Naive thymus-derived CD4-positive, alpha-beta T cell (primary cell): ENCODE measurements at regions of chrX and their contacts with region 1.

Region 1: DNA sequence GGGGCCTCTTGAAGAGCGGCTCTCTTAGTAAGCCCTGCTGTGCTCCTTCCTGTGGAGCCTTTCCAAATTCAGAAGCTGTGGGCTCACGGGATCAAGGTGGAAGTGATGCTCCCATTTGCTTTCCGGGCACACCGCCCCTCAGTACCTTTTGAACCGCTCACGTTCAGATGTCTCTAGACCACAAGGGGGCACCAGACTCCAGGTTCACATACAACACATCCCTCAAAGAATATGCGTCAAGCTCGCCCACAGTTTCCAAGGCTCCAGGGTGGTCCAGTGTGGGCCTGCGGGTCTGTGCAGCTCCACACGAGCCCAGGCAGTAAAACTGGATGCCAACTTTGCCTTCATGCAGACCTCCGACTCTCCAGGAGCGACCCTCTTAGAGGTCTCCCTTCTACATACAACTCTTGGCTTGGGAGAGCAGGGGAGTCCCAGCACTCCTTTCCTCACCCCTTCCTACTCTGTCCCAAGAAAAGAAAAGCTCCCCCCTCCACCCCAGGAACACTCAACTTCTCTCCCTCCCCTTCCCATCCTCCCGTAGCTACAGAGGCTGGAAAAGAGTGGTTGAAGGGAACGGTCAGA is 11.0 kb downstream of the SUPT20HL1 start:
- DNase-seq: peak; percentile 15 to 60 (median 44)
- ATAC-seq: peak; percentile 79
- H3K4me3 ChIP-seq: no peak overlapping the region
- H3K4me3 Mint-ChIP-seq: peak overlapping the region; percentile 8 to 82 (median 52)
- H3K27ac ChIP-seq: no peak overlapping the region
- H3K27ac Mint-ChIP-seq: peak overlapping the region in 1 of 9 donors; percentile 83
- H3K4me1 ChIP-seq: no peaks in the 10 kb centered on the region
- H3K4me1 Mint-ChIP-seq: peaks cover 5 to 30% (median 9%) of the 10 kb centered on the region in 7 donors
- H3K27me3 ChIP-seq: no peaks in the 10 kb centered on the region
- H3K27me3 Mint-ChIP-seq: peaks cover 0 to 4% (median 0%) of the 10 kb centered on the region in 5 donors

Region 2: GRCh38 chrX:24081661-24082264 is 289.7 kb before region 1 on chrX:
- CTCF ChIA-PET with region 1: no interaction called
- POLR2A ChIA-PET with region 1: no interaction called
- intact Hi-C with region 1: loop called in 1 of 2 experiments (anchors 5 kb)
- DNase-seq: peak; percentile 7 to 54 (median 43)
- ATAC-seq: peak; percentile 75
- H3K4me3 ChIP-seq: no peak overlapping the region
- H3K4me3 Mint-ChIP-seq: peak overlapping the region in 2 of 10 donors; percentile 23 to 38
- H3K27ac ChIP-seq: no peak overlapping the region
- H3K27ac Mint-ChIP-seq: no peak overlapping the region
- H3K4me1 ChIP-seq: no peaks in the 10 kb centered on the region
- H3K4me1 Mint-ChIP-seq: peaks cover 0 to 11% (median 7%) of the 10 kb centered on the region in 7 donors
- H3K27me3 ChIP-seq: no peaks in the 10 kb centered on the region
- H3K27me3 Mint-ChIP-seq: no peaks in the 10 kb centered on the region

Region 3: DNA sequence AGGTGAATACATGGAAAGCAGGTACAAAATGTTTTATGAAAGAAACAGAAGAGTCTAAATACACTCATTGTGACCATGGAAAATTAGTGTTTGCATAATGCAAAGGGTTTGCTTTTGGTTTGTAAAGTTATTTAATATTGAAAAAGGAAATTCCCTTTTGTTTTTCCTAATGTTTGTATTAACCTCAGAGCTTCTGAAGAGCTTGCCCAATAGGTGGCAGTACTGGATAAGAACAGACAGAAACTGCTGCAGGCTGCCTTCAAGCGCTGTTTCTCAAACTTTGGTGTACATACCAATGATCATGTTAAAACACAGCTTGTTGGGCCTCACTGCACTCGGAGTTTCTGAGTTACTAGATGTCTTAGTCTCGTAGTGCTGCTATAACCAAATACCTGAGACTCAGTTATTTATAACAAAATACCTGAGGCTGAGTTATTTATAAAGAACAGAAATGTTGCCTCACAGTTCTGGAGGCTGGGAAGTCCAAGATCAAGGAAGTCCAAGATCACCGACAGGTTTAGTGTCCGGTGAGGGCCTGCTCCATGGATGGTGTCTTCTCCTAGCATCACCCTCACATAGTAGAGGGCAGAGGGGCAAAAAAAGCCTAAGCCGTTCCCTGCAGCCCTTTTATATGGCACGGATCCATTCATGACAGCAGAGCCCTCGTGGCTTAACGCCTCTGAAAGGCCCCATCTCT is 111.8 kb before region 1 on chrX:
- CTCF ChIA-PET with region 1: interaction called, 3 read pairs
- POLR2A ChIA-PET with region 1: no interaction called
- intact Hi-C with region 1: loop called (anchors 1 to 2 kb)
- DNase-seq: peak in 5 of 9 donors; percentile 3 to 39 (median 6)
- ATAC-seq: peak; percentile 29
- H3K4me3 ChIP-seq: no peak overlapping the region
- H3K4me3 Mint-ChIP-seq: no peak overlapping the region
- H3K27ac ChIP-seq: no peak overlapping the region
- H3K27ac Mint-ChIP-seq: no peak overlapping the region
- H3K4me1 ChIP-seq: no peaks in the 10 kb centered on the region
- H3K4me1 Mint-ChIP-seq: peaks cover 9 to 27% (median 15%) of the 10 kb centered on the region in 7 donors
- H3K27me3 ChIP-seq: no peaks in the 10 kb centered on the region
- H3K27me3 Mint-ChIP-seq: peaks cover 0 to 2% (median 0%) of the 10 kb centered on the region in 5 donors

Region 4: DNA sequence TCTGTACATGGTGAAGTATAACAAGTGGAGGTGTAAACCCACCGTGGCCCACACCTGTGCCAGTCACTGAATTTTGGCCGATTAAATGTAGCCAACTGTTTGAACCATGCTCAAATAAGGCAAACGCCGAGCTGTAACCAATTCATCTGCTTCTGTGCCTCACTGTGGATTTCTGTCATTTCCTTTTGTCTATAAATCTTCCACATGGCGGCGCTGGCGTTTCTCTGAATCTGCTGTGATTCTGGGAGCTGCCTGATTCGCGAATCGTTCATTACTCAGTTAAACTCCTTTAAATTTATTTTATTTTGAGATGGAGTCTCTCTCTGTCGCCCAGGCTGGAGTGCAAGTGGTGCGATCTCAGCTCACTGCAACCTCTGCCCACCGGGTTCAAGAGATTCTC is 76.9 kb before region 1 on chrX:
- CTCF ChIA-PET with region 1: no interaction called
- POLR2A ChIA-PET with region 1: no interaction called
- intact Hi-C with region 1: loop called in 1 of 2 experiments (anchors 5 kb)
- DNase-seq: peak in 1 of 9 donors; percentile 21
- ATAC-seq: no peak
- H3K4me3 ChIP-seq: no peak overlapping the region
- H3K4me3 Mint-ChIP-seq: no peak overlapping the region
- H3K27ac ChIP-seq: no peak overlapping the region
- H3K27ac Mint-ChIP-seq: no peak overlapping the region
- H3K4me1 ChIP-seq: no peaks in the 10 kb centered on the region
- H3K4me1 Mint-ChIP-seq: no peaks in the 10 kb centered on the region
- H3K27me3 ChIP-seq: no peaks in the 10 kb centered on the region
- H3K27me3 Mint-ChIP-seq: peaks cover 0 to 2% (median 0%) of the 10 kb centered on the region in 5 donors

Region 5: GRCh38 chrX:24306440-24306839 is 65.0 kb before region 1 on chrX:
- CTCF ChIA-PET with region 1: no interaction called
- POLR2A ChIA-PET with region 1: no interaction called
- intact Hi-C with region 1: loop called in 1 of 2 experiments (anchors 5 kb)
- DNase-seq: no peak
- ATAC-seq: no peak
- H3K4me3 ChIP-seq: no peak overlapping the region
- H3K4me3 Mint-ChIP-seq: no peak overlapping the region
- H3K27ac ChIP-seq: no peak overlapping the region
- H3K27ac Mint-ChIP-seq: no peak overlapping the region
- H3K4me1 ChIP-seq: no peaks in the 10 kb centered on the region
- H3K4me1 Mint-ChIP-seq: peaks cover 0 to 12% (median 0%) of the 10 kb centered on the region in 7 donors
- H3K27me3 ChIP-seq: no peaks in the 10 kb centered on the region
- H3K27me3 Mint-ChIP-seq: no peaks in the 10 kb centered on the region

Region 6: GRCh38 chrX:24969812-24970211 is 598.3 kb after region 1 on chrX:
- CTCF ChIA-PET with region 1: no interaction called
- POLR2A ChIA-PET with region 1: no interaction called
- intact Hi-C with region 1: no loop called
- DNase-seq: no peak
- ATAC-seq: no peak
- H3K4me3 ChIP-seq: no peak overlapping the region
- H3K4me3 Mint-ChIP-seq: no peak overlapping the region
- H3K27ac ChIP-seq: no peak overlapping the region
- H3K27ac Mint-ChIP-seq: no peak overlapping the region
- H3K4me1 ChIP-seq: no peaks in the 10 kb centered on the region
- H3K4me1 Mint-ChIP-seq: no peaks in the 10 kb centered on the region
- H3K27me3 ChIP-seq: no peaks in the 10 kb centered on the region
- H3K27me3 Mint-ChIP-seq: no peaks in the 10 kb centered on the region